Activated CD4-positive, alpha-beta memory T cell treated with anti-CD3 and anti-CD28 coated beads for 36 hours (primary cell): ENCODE measurements at regions of chr3 and their contacts with region 1.

Region 1: GRCh38 chr3:187745201-187746058 is at the start of gene BCL6:
- DNase-seq: peak; percentile 91
- H3K4me3 Mint-ChIP-seq: peak within 1 kb of the TSS; percentile 90
- H3K27ac Mint-ChIP-seq: peak within 1 kb of the TSS; percentile 99
- H3K4me1 Mint-ChIP-seq: peaks cover 47% of the 10 kb centered on the region
- H3K27me3 Mint-ChIP-seq: no peaks in the 10 kb centered on the region
- total RNA-seq, gene BCL6: 41.4 to 51.3 TPM

Region 2: DNA sequence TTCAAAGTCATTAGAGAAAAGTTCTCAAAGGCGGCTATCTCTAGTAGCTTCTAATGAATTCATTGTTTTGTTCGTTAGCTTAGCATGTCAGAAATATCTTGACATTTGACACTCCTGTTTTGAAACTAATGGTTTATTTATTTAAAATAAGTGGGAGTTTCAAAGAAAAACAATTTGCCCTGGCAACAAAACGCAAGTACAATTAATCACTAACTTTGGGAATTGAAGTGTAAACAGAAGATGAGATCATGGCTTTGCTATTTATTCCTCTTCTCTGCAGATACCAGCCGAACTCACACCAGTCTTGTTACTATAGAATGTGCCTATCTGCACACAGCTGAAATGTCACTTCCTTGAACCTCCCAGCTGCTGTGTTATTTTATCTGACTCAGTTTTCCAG is 481.4 kb before region 1 on chr3:
- CTCF ChIA-PET with region 1: no interaction called
- POLR2A ChIA-PET with region 1: no interaction called
- intact Hi-C with region 1: no loop called
- DNase-seq: no peak
- H3K4me3 Mint-ChIP-seq: no peak overlapping the region
- H3K27ac Mint-ChIP-seq: no peak overlapping the region
- H3K4me1 Mint-ChIP-seq: no peaks in the 10 kb centered on the region
- H3K27me3 Mint-ChIP-seq: peaks cover 15% of the 10 kb centered on the region

Region 3: DNA sequence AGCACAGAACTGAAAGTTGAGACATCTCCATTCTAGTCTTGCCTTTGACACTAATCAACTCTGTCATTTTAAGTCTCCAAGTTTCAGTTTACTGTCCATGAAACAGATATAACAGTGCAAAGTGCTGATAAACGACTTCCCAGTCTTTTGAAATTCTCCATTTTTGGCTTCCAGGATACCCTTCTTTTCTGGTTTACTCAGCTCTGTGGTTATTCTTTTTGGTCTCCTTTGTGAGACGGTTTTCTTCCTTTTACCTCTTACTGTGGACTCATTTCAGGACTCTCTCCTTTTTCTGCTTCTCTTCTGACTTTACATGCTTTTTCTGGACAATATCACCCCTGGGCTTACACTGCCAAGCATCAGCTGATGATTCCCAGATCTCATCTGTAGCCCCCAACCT is 94.1 kb before region 1 on chr3:
- CTCF ChIA-PET with region 1: no interaction called
- POLR2A ChIA-PET with region 1: no interaction called
- intact Hi-C with region 1: no loop called
- DNase-seq: no peak
- H3K4me3 Mint-ChIP-seq: no peak overlapping the region
- H3K27ac Mint-ChIP-seq: no peak overlapping the region
- H3K4me1 Mint-ChIP-seq: no peaks in the 10 kb centered on the region
- H3K27me3 Mint-ChIP-seq: peaks cover 34% of the 10 kb centered on the region

Region 4: DNA sequence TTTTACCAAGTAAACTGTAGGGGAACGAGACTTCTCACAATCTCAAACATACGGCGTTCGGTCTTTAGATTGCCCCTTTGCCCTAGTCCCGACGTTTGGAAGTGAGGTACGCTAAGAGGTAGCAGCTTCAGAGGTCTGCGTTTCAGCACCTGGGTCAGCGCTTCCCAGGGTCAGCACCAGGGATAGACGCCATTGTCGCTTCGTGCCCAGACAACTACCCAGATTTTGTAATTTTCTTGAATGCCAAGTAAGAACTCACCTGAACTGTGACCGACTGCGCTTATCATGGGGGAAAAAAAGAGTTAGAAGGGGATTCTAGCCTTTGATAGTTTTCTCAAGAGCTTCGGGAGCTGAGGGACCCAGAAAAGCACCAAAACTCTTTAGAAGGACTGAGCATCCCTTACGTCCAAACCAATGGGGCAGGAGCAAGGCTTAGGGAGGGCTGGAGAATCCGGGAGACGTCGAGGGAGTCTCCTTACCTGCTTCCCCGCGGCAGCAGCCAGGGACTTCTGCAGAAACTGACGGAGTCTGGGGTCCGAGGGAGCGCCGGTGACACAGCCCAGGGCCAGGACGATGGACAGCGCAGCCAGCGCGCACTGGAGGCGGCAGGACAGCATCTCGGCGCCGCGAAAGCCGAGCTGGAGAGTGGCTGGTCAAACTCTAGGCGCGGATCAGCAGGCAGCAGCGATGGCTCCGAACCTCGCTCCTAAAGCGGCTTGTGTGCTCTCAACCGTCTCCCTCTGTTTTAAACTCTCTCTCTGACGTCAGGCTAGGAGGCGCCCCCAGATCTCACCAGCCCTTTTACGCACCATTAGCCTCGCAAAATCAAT is 75.5 kb before region 1 on chr3 and contains the start of gene SST:
- CTCF ChIA-PET with region 1: no interaction called
- POLR2A ChIA-PET with region 1: no interaction called
- intact Hi-C with region 1: no loop called
- DNase-seq: peak; percentile 49
- H3K4me3 Mint-ChIP-seq: no peak within 1 kb of the TSS
- H3K27ac Mint-ChIP-seq: no peak within 1 kb of the TSS
- H3K4me1 Mint-ChIP-seq: peaks cover 6% of the 10 kb centered on the region
- H3K27me3 Mint-ChIP-seq: peaks cover 65% of the 10 kb centered on the region
- total RNA-seq, gene SST: not detected

Region 5: GRCh38 chr3:187770224-187770623 is 24.8 kb after region 1 on chr3:
- CTCF ChIA-PET with region 1: interaction called, 6 read pairs
- POLR2A ChIA-PET with region 1: interaction called, 7 read pairs
- intact Hi-C with region 1: loop called (anchors 1 kb)
- DNase-seq: peak; percentile 63
- H3K4me3 Mint-ChIP-seq: peak overlapping the region; percentile 20
- H3K27ac Mint-ChIP-seq: peak overlapping the region; percentile 73
- H3K4me1 Mint-ChIP-seq: peaks cover 43% of the 10 kb centered on the region
- H3K27me3 Mint-ChIP-seq: no peaks in the 10 kb centered on the region

Region 6: GRCh38 chr3:187831125-187832051 is 86.0 kb after region 1 on chr3:
- CTCF ChIA-PET with region 1: interaction called, 5 read pairs
- POLR2A ChIA-PET with region 1: no interaction called
- intact Hi-C with region 1: loop called (anchors 1 kb)
- DNase-seq: no peak
- H3K4me3 Mint-ChIP-seq: no peak overlapping the region
- H3K27ac Mint-ChIP-seq: no peak overlapping the region
- H3K4me1 Mint-ChIP-seq: peaks cover 27% of the 10 kb centered on the region
- H3K27me3 Mint-ChIP-seq: no peaks in the 10 kb centered on the region

Region 7: DNA sequence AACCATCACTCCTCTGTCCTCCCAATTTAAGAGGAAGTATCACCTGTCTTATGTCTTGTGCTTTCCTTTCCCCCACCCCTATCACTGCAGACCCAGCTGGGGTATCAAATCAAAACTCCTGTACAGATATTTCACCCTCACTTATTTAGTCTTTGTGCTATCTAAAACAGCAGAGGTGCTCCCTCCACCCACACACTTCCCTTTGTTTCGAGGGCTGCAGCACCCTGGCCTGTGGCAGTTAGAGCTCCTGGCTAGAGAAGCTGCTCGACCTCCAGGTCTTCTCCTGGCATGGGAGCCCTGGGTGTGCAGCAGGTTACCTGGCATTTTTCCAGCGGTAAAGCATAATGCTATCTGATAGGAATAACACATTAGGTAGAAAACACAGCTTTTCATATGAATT is 181.2 kb after region 1 on chr3:
- CTCF ChIA-PET with region 1: interaction called, 16 read pairs
- POLR2A ChIA-PET with region 1: interaction called, 17 read pairs
- intact Hi-C with region 1: loop called (anchors 1 kb)
- DNase-seq: peak; percentile 37
- H3K4me3 Mint-ChIP-seq: no peak overlapping the region
- H3K27ac Mint-ChIP-seq: no peak overlapping the region
- H3K4me1 Mint-ChIP-seq: peaks cover 75% of the 10 kb centered on the region
- H3K27me3 Mint-ChIP-seq: no peaks in the 10 kb centered on the region

Region 8: DNA sequence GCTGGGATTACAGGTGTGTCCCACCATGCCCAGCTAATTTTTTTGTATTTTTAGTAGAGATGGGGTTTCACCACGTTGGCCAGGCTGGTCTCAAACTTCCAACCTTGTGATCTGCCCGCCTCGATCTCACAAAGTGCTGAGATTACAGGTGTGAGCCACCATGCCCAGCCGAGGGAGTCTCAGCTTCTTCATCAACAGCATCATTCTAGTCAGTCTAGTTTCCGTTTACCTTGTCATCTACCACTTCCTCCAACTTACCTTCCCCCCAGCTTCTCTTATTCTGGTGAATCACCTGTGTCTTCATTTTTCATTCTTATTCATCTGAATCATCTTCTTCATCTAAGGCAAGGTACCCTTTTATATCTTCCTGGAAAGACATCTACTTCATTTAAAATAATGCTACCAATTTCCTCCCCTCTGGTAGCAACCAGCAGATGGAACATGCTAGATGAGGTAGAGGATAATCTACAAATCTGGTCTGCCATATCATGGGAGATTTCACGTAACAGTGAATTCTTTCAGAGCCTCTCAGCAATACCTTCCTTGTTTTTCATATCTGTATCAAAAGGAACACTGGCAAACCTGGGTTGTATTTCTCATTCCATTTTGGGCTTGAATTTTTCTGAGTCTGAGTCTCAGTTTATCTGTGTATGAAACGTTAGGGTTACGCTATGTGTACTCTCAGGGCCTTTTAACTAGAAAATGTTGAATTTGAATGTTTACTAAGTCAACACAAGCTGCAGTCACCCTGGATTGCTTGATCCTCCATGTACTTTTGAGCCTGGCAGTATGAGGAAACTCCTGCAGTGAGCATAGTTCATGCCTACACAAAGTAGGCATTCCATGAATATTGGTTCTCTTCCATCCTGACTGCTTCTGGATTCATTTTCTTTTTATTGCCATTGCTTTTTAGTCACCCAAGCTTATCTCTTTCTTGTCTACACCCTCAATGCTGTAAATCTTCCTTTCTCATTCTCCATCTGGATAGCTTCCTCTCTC is 425.3 kb after region 1 on chr3:
- CTCF ChIA-PET with region 1: interaction called, 24 read pairs
- POLR2A ChIA-PET with region 1: interaction called, 5 read pairs
- intact Hi-C with region 1: loop called (anchors 1 kb)
- DNase-seq: peak; percentile 82
- H3K4me3 Mint-ChIP-seq: peak overlapping the region; percentile 28
- H3K27ac Mint-ChIP-seq: peak overlapping the region; percentile 89
- H3K4me1 Mint-ChIP-seq: peaks cover 58% of the 10 kb centered on the region
- H3K27me3 Mint-ChIP-seq: no peaks in the 10 kb centered on the region

Region 9: GRCh38 chr3:188286087-188286513 is 540.7 kb after region 1 on chr3:
- CTCF ChIA-PET with region 1: interaction called, 57 read pairs
- POLR2A ChIA-PET with region 1: interaction called, 22 read pairs
- intact Hi-C with region 1: loop called (anchors 1 kb)
- DNase-seq: peak; percentile 42
- H3K4me3 Mint-ChIP-seq: no peak overlapping the region
- H3K27ac Mint-ChIP-seq: peak overlapping the region; percentile 34
- H3K4me1 Mint-ChIP-seq: peaks cover 51% of the 10 kb centered on the region
- H3K27me3 Mint-ChIP-seq: no peaks in the 10 kb centered on the region

Region 10: DNA sequence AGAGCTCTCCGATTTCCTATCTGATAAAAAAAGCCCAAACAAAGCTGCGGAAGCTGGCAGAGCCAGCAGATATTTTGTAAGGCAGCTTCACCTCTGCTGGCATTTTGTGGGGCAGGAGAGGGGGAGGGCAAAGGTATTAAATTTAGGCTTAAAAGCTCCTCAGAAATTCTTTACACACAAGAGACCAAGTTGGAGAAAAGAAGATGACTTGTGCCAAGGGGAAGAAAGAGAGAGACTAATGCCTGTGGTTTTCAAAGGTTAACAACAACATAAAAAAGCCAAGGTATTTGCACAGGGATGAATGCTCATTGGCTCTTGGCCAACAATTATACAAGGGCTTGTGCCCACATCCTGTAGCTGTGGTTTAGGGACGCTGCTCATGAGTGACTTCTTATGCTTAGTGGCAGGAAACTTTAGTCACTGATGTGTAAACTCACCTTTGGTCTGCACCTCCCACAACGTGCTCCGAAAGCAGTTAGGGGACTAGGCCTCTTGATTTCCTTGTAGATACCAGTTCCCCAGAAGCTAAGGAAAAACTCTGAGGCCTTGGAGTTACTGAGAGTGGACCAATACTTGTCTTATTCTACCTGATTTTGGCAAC is 1579.2 kb after region 1 on chr3:
- CTCF ChIA-PET with region 1: no interaction called
- POLR2A ChIA-PET with region 1: no interaction called
- intact Hi-C with region 1: loop called (anchors 10 kb)
- DNase-seq: peak; percentile 93
- H3K4me3 Mint-ChIP-seq: peak overlapping the region; percentile 46
- H3K27ac Mint-ChIP-seq: peak overlapping the region; percentile 93
- H3K4me1 Mint-ChIP-seq: peaks cover 58% of the 10 kb centered on the region
- H3K27me3 Mint-ChIP-seq: no peaks in the 10 kb centered on the region